Heart left ventricle (tissue), 16 donors: ENCODE measurements at regions of chr20 and their contacts with region 1.

Region 1: GRCh38 chr20:36861875-36862801 is 13.8 kb upstream of the TLDC2 start:
- DNase-seq: peak; percentile 89 to 94 (median 91)
- ATAC-seq: peak; percentile 59 to 80 (median 68)
- H3K4me3 ChIP-seq: peak overlapping the region; percentile 13 to 87 (median 68)
- H3K27ac ChIP-seq: peak overlapping the region; percentile 85 to 97 (median 92)
- H3K4me1 ChIP-seq: peaks cover 9 to 70% (median 47%) of the 10 kb centered on the region in 12 donors
- H3K27me3 ChIP-seq: no peaks in the 10 kb centered on the region
- CTCF ChIP-seq: no peak
- POLR2A ChIP-seq: peak in 1 of 2 donors; percentile 65

Region 2: DNA sequence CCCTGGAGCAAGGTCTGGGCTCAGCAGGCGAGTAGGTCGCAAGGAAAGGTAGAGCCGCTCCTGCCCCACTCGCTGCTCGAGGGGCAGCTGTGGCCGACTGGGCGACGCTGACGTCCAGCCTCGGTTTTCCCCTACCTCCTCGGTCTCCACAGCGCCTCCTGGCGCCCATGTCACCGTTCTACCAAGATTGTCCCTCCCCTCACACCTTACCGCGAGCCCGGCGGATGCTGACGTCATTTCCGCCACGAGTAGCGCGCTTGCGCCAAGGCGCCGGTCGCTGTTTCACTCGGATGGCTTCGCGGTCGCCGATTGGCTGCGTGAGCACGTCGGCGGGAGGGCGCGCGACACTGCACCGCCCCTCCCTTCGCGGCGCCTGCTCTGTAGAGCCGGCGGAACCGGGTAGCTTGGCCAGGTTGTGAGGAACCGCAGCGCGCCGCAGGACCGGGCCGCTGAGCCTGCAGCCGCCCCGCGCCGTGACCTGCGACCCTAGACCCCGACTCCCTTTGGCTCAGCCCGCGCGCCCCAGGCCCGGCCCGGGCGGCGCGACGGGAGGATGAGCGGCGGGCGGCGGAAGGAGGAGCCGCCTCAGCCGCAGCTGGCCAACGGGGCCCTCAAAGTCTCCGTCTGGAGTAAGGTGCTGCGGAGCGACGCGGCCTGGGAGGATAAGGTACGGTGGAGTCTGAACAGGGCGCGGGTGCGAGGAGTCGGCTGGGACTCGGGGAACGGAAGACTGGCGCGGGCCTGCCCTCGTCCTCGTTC is 256.6 kb before region 1 on chr20 and contains the start of gene RAB5IF:
- intact Hi-C with region 1: loop called in 1 of 10 experiments (anchors 10 kb)
- DNase-seq: peak; percentile 99 to 100 (median 99)
- ATAC-seq: peak; percentile 97 to 99 (median 98)
- H3K4me3 ChIP-seq: peak within 1 kb of the TSS; percentile 78 to 99 (median 93)
- H3K27ac ChIP-seq: peak within 1 kb of the TSS; percentile 72 to 96 (median 88)
- H3K4me1 ChIP-seq: peaks cover 4 to 34% (median 20%) of the 10 kb centered on the region in 12 donors
- H3K27me3 ChIP-seq: no peaks in the 10 kb centered on the region
- CTCF ChIP-seq: peak; percentile 76 to 98 (median 94)
- POLR2A ChIP-seq: peak in 1 of 2 donors; percentile 90
- total RNA-seq, gene RAB5IF: 35.5 to 87.7 (median 63.1) TPM

Region 3: DNA sequence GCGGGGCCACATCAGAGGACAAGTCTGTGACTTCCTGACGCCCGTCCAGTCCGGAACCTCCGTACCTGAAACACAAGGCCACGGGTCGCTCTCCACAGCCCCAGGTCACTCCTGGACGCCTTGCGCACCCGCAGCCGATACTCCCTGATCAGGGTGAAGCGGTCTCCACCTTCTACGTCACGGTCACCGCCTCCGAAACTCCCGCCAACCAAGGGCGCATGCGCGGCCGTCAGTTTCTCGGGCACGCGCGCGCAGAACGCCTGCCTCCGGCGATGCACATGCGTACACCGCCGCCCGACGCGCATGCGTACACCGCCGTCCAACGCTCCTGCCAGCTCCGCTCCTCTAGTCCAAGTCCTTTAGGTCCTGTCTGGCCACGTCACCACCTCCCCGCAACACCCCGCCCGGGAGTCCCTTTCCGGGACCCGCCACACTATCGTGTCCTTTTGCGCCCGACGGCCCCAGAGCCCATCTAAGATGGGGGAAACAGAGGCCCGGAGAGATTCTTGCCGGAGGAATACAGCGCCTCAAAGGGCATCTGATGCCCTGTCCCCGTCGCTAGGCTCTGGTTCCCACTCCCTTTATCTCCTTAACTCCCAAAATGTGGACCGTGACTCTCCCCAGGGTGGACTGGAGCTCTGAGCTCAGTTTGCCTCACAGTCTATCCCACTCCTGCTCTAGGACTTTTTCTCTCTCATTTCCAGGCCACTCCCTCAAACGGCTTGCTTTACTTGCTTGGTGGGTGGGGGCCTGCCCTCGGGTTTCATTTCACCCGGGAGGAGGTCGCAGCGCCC is 88.3 kb before region 1 on chr20 and contains the start of gene DSN1:
- intact Hi-C with region 1: loop called in 5 of 10 experiments (anchors 1 to 10 kb)
- DNase-seq: peak; percentile 97 to 100 (median 98)
- ATAC-seq: peak; percentile 95 to 98 (median 96)
- H3K4me3 ChIP-seq: peak within 1 kb of the TSS; percentile 41 to 93 (median 74)
- H3K27ac ChIP-seq: peak within 1 kb of the TSS; percentile 91 to 99 (median 97)
- H3K4me1 ChIP-seq: peaks cover 0 to 38% (median 18%) of the 10 kb centered on the region in 12 donors
- H3K27me3 ChIP-seq: no peaks in the 10 kb centered on the region
- CTCF ChIP-seq: peak in 2 of 12 donors; percentile 51 to 76
- POLR2A ChIP-seq: peak; percentile 6 to 69
- total RNA-seq, gene DSN1: 3.7 to 6.2 (median 4.9) TPM

Region 4: GRCh38 chr20:36808317-36809257 is 53.6 kb before region 1 on chr20:
- intact Hi-C with region 1: no loop called
- DNase-seq: peak; percentile 46 to 86 (median 52)
- ATAC-seq: peak in 3 of 4 donors; percentile 39 to 66 (median 57)
- H3K4me3 ChIP-seq: no peak overlapping the region
- H3K27ac ChIP-seq: no peak overlapping the region
- H3K4me1 ChIP-seq: peaks cover 0 to 14% (median 0%) of the 10 kb centered on the region in 12 donors
- H3K27me3 ChIP-seq: no peaks in the 10 kb centered on the region
- CTCF ChIP-seq: peak; percentile 50 to 83 (median 64)
- POLR2A ChIP-seq: no peak

Region 5: GRCh38 chr20:36821964-36822437 is 40.1 kb before region 1 on chr20:
- intact Hi-C with region 1: loop called in 4 of 10 experiments (anchors 5 kb)
- DNase-seq: peak in 2 of 5 donors; percentile 40 to 53
- ATAC-seq: peak; percentile 60 to 84 (median 71)
- H3K4me3 ChIP-seq: no peak overlapping the region
- H3K27ac ChIP-seq: peak overlapping the region in 8 of 12 donors; percentile 4 to 69 (median 20)
- H3K4me1 ChIP-seq: peaks cover 0 to 46% (median 22%) of the 10 kb centered on the region in 12 donors
- H3K27me3 ChIP-seq: no peaks in the 10 kb centered on the region
- CTCF ChIP-seq: no peak
- POLR2A ChIP-seq: no peak

Region 6: GRCh38 chr20:36835453-36836198 is 26.5 kb before region 1 on chr20:
- intact Hi-C with region 1: loop called in 4 of 10 experiments (anchors 2 kb)
- DNase-seq: peak; percentile 95 to 96 (median 96)
- ATAC-seq: peak; percentile 83 to 91 (median 90)
- H3K4me3 ChIP-seq: peak overlapping the region in 8 of 12 donors; percentile 11 to 44 (median 33)
- H3K27ac ChIP-seq: peak overlapping the region in 11 of 12 donors; percentile 69 to 89 (median 81)
- H3K4me1 ChIP-seq: peaks cover 6 to 66% (median 52%) of the 10 kb centered on the region in 12 donors
- H3K27me3 ChIP-seq: no peaks in the 10 kb centered on the region
- CTCF ChIP-seq: no peak
- POLR2A ChIP-seq: peak in 1 of 2 donors; percentile 52